PC-9 (cell line): ENCODE measurements at regions of chr2 and their contacts with region 1.

Region 1: GRCh38 chr2:158619496-158619895 is 162.7 kb downstream of the PKP4 start:
- DNase-seq: peak in 1 of 2 experiments; percentile 57
- H3K4me3 ChIP-seq: no peak overlapping the region
- H3K27ac ChIP-seq: peak overlapping the region; percentile 58
- H3K4me1 ChIP-seq: peaks cover 11% of the 10 kb centered on the region
- H3K27me3 ChIP-seq: no peaks in the 10 kb centered on the region
- CTCF ChIP-seq: no peak

Region 2: GRCh38 chr2:158650646-158651357 is 31.3 kb after region 1 on chr2:
- CTCF ChIA-PET with region 1: no interaction called
- POLR2A ChIA-PET with region 1: interaction called, 10 read pairs
- intact Hi-C with region 1: no loop called
- DNase-seq: no peak
- H3K4me3 ChIP-seq: no peak overlapping the region
- H3K27ac ChIP-seq: no peak overlapping the region
- H3K4me1 ChIP-seq: no peaks in the 10 kb centered on the region
- H3K27me3 ChIP-seq: no peaks in the 10 kb centered on the region
- CTCF ChIP-seq: no peak

Region 3: GRCh38 chr2:158773121-158773520 is 153.6 kb after region 1 on chr2:
- CTCF ChIA-PET with region 1: no interaction called
- POLR2A ChIA-PET with region 1: no interaction called
- intact Hi-C with region 1: no loop called
- DNase-seq: no peak
- H3K4me3 ChIP-seq: no peak overlapping the region
- H3K27ac ChIP-seq: no peak overlapping the region
- H3K4me1 ChIP-seq: no peaks in the 10 kb centered on the region; the same call in 1 of the 2 replicates
- H3K27me3 ChIP-seq: no peaks in the 10 kb centered on the region
- CTCF ChIP-seq: no peak